Adrenal gland (tissue), 19 donors: ENCODE measurements at regions of chr4 and their contacts with region 1.

Region 1: GRCh38 chr4:20554134-20554533 is 146.1 kb upstream of the PACRGL start:
- DNase-seq: no peak
- H3K4me3 ChIP-seq: no peak overlapping the region
- H3K27ac ChIP-seq: no peak overlapping the region
- H3K4me1 ChIP-seq: no peaks in the 10 kb centered on the region
- H3K27me3 ChIP-seq: no peaks in the 10 kb centered on the region
- CTCF ChIP-seq: no peak
- POLR2A ChIP-seq: no peak

Region 2: GRCh38 chr4:20684852-20685763 is 131.0 kb after region 1 on chr4:
- intact Hi-C with region 1: loop called in 1 of 2 experiments (anchors 10 kb)
- DNase-seq: no peak
- H3K4me3 ChIP-seq: no peak overlapping the region
- H3K27ac ChIP-seq: no peak overlapping the region
- H3K4me1 ChIP-seq: no peaks in the 10 kb centered on the region
- H3K27me3 ChIP-seq: no peaks in the 10 kb centered on the region
- CTCF ChIP-seq: peak; percentile 53 to 76 (median 68)
- POLR2A ChIP-seq: no peak